ENCODE measurements at regions of chr11 and their contacts with region 1.

Region 1: GRCh38 chr11:9613118-9613829 is 39.8 kb downstream of the WEE1 start:
- DNase-seq: peak; percentile 80
- ATAC-seq: peak; percentile 35
- H3K4me3 Mint-ChIP-seq: peak overlapping the region; percentile 92
- H3K27ac Mint-ChIP-seq: peak overlapping the region; percentile 100
- H3K4me1 Mint-ChIP-seq: peaks cover 92% of the 10 kb centered on the region
- H3K27me3 Mint-ChIP-seq: no peaks in the 10 kb centered on the region
- CTCF ChIP-seq: peak; percentile 74

Region 2: DNA sequence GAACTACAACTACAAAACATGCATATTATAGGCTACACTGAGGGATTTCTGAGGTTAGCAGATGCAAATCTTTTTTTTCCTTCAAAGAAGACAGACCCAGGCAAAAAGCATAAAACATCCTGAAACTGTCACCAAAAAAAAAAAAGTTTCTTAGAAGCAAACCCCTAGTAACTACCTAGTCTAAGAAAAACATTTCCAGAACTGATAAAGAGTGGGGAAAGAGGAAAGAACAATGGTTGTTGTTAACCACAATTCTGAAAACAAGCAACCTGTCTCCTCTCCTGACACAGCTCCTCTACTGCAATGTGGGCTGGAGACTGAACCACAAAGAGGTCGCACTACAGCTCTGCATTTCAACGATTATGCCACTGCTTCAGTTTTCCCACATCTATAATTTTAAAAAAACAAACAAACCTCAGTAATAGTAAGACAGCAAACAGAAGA is 363.1 kb before region 1 on chr11:
- CTCF ChIA-PET with region 1: no interaction called
- POLR2A ChIA-PET with region 1: no interaction called
- intact Hi-C with region 1: no loop called
- DNase-seq: no peak
- ATAC-seq: no peak
- H3K4me3 Mint-ChIP-seq: peak overlapping the region; percentile 1
- H3K27ac Mint-ChIP-seq: no peak overlapping the region
- H3K4me1 Mint-ChIP-seq: peaks cover 41% of the 10 kb centered on the region
- H3K27me3 Mint-ChIP-seq: no peaks in the 10 kb centered on the region
- CTCF ChIP-seq: no peak

Region 3: GRCh38 chr11:9460322-9461067 is 152.8 kb before region 1 on chr11 and contains the start of gene ZNF143:
- CTCF ChIA-PET with region 1: no interaction called
- POLR2A ChIA-PET with region 1: interaction called, 22 read pairs
- intact Hi-C with region 1: loop called (anchors 2 kb)
- DNase-seq: peak; percentile 99
- ATAC-seq: peak; percentile 85
- H3K4me3 Mint-ChIP-seq: peak within 1 kb of the TSS; percentile 97
- H3K27ac Mint-ChIP-seq: peak within 1 kb of the TSS; percentile 98
- H3K4me1 Mint-ChIP-seq: peaks cover 30% of the 10 kb centered on the region
- H3K27me3 Mint-ChIP-seq: no peaks in the 10 kb centered on the region
- CTCF ChIP-seq: no peak
- total RNA-seq, gene ZNF143: 37.8 and 41.1 TPM in 2 replicates

Region 4: GRCh38 chr11:9580894-9581293 is 32.4 kb before region 1 on chr11:
- CTCF ChIA-PET with region 1: interaction called, 18 read pairs
- POLR2A ChIA-PET with region 1: interaction called, 28 read pairs
- intact Hi-C with region 1: no loop called
- DNase-seq: no peak
- ATAC-seq: no peak
- H3K4me3 Mint-ChIP-seq: no peak overlapping the region
- H3K27ac Mint-ChIP-seq: peak overlapping the region; percentile 35
- H3K4me1 Mint-ChIP-seq: peaks cover 30% of the 10 kb centered on the region
- H3K27me3 Mint-ChIP-seq: no peaks in the 10 kb centered on the region
- CTCF ChIP-seq: no peak

Region 5: GRCh38 chr11:9643751-9644150 is 30.5 kb after region 1 on chr11:
- CTCF ChIA-PET with region 1: interaction called, 4 read pairs
- POLR2A ChIA-PET with region 1: interaction called, 44 read pairs
- intact Hi-C with region 1: loop called (anchors 1 kb)
- DNase-seq: no peak
- ATAC-seq: peak; percentile 67
- H3K4me3 Mint-ChIP-seq: peak overlapping the region; percentile 28
- H3K27ac Mint-ChIP-seq: peak overlapping the region; percentile 77
- H3K4me1 Mint-ChIP-seq: peaks cover 69% of the 10 kb centered on the region
- H3K27me3 Mint-ChIP-seq: no peaks in the 10 kb centered on the region
- CTCF ChIP-seq: no peak

Region 6: GRCh38 chr11:9653928-9654280 is 40.6 kb after region 1 on chr11:
- CTCF ChIA-PET with region 1: no interaction called
- POLR2A ChIA-PET with region 1: no interaction called
- intact Hi-C with region 1: no loop called
- DNase-seq: no peak
- ATAC-seq: no peak
- H3K4me3 Mint-ChIP-seq: no peak overlapping the region
- H3K27ac Mint-ChIP-seq: no peak overlapping the region
- H3K4me1 Mint-ChIP-seq: peaks cover 18% of the 10 kb centered on the region
- H3K27me3 Mint-ChIP-seq: no peaks in the 10 kb centered on the region
- CTCF ChIP-seq: no peak

Region 7: GRCh38 chr11:9688716-9689511 is 75.6 kb after region 1 on chr11:
- CTCF ChIA-PET with region 1: interaction called, 19 read pairs
- POLR2A ChIA-PET with region 1: interaction called, 55 read pairs
- intact Hi-C with region 1: loop called (anchors 1 kb)
- DNase-seq: no peak
- ATAC-seq: peak; percentile 80
- H3K4me3 Mint-ChIP-seq: no peak overlapping the region
- H3K27ac Mint-ChIP-seq: no peak overlapping the region
- H3K4me1 Mint-ChIP-seq: peaks cover 52% of the 10 kb centered on the region
- H3K27me3 Mint-ChIP-seq: no peaks in the 10 kb centered on the region
- CTCF ChIP-seq: no peak

Region 8: GRCh38 chr11:9748361-9748970 is 135.2 kb after region 1 on chr11:
- CTCF ChIA-PET with region 1: interaction called, 101 read pairs
- POLR2A ChIA-PET with region 1: interaction called, 99 read pairs
- intact Hi-C with region 1: loop called (anchors 1 kb)
- DNase-seq: peak; percentile 46
- ATAC-seq: peak; percentile 83
- H3K4me3 Mint-ChIP-seq: peak overlapping the region; percentile 53
- H3K27ac Mint-ChIP-seq: peak overlapping the region; percentile 77
- H3K4me1 Mint-ChIP-seq: peaks cover 65% of the 10 kb centered on the region
- H3K27me3 Mint-ChIP-seq: no peaks in the 10 kb centered on the region
- CTCF ChIP-seq: peak; percentile 76

Region 9: GRCh38 chr11:10322830-10323792 is 709.8 kb after region 1 on chr11:
- CTCF ChIA-PET with region 1: no interaction called
- POLR2A ChIA-PET with region 1: no interaction called
- intact Hi-C with region 1: loop called (anchors 5 kb)
- DNase-seq: no peak
- ATAC-seq: peak; percentile 69
- H3K4me3 Mint-ChIP-seq: no peak overlapping the region
- H3K27ac Mint-ChIP-seq: peak overlapping the region; percentile 67
- H3K4me1 Mint-ChIP-seq: peaks cover 14% of the 10 kb centered on the region
- H3K27me3 Mint-ChIP-seq: peaks cover 11% of the 10 kb centered on the region
- CTCF ChIP-seq: no peak